ENCODE measurements at regions of chr2 and their contacts with region 1.

Region 1: GRCh38 chr2:31255911-31256571 is 22.1 kb downstream of the EHD3 start:
- DNase-seq: peak; percentile 54
- ATAC-seq: peak; percentile 65
- H3K4me3 ChIP-seq: peak overlapping the region in 3 of 5 experiments; percentile 12 to 26 (median 22)
- H3K4me3 Mint-ChIP-seq: peak overlapping the region; percentile 83
- H3K27ac ChIP-seq: peak overlapping the region; percentile 51 to 60
- H3K27ac Mint-ChIP-seq: peak overlapping the region; percentile 96
- H3K4me1 ChIP-seq: peaks cover 78 to 86% of the 10 kb centered on the region in 2 donors
- H3K4me1 Mint-ChIP-seq: peaks cover 83% of the 10 kb centered on the region
- H3K27me3 ChIP-seq: no peaks in the 10 kb centered on the region
- H3K27me3 Mint-ChIP-seq: no peaks in the 10 kb centered on the region
- CTCF ChIP-seq: no peak

Region 2: DNA sequence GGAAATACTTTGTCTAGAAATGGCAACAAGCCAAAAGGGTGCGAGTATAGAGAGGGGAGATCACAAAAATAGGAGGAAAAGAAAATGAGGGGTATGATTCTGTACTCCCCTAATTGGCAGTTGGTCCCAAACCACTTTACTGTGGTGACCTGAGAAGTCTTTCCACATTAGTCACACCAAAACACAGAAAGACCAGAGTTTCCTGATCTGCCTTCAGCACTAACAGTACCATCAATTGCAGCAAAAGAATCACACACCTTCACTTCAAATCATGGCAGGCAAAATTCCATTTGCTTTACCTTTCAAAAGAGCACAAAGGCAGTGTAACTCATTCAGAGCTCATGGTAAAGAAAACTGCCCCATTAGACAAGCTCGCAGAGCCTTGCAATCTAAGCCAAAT is 1421.4 kb before region 1 on chr2:
- CTCF ChIA-PET with region 1: no interaction called
- POLR2A ChIA-PET with region 1: no interaction called
- intact Hi-C with region 1: no loop called
- DNase-seq: no peak
- ATAC-seq: no peak
- H3K4me3 ChIP-seq: no peak overlapping the region
- H3K4me3 Mint-ChIP-seq: no peak overlapping the region
- H3K27ac ChIP-seq: no peak overlapping the region
- H3K27ac Mint-ChIP-seq: no peak overlapping the region
- H3K4me1 ChIP-seq: no peaks in the 10 kb centered on the region
- H3K4me1 Mint-ChIP-seq: no peaks in the 10 kb centered on the region
- H3K27me3 ChIP-seq: peaks cover 0 to 3% (median 0%) of the 10 kb centered on the region in 4 experiments
- H3K27me3 Mint-ChIP-seq: peaks cover 7% of the 10 kb centered on the region
- CTCF ChIP-seq: no peak

Region 3: DNA sequence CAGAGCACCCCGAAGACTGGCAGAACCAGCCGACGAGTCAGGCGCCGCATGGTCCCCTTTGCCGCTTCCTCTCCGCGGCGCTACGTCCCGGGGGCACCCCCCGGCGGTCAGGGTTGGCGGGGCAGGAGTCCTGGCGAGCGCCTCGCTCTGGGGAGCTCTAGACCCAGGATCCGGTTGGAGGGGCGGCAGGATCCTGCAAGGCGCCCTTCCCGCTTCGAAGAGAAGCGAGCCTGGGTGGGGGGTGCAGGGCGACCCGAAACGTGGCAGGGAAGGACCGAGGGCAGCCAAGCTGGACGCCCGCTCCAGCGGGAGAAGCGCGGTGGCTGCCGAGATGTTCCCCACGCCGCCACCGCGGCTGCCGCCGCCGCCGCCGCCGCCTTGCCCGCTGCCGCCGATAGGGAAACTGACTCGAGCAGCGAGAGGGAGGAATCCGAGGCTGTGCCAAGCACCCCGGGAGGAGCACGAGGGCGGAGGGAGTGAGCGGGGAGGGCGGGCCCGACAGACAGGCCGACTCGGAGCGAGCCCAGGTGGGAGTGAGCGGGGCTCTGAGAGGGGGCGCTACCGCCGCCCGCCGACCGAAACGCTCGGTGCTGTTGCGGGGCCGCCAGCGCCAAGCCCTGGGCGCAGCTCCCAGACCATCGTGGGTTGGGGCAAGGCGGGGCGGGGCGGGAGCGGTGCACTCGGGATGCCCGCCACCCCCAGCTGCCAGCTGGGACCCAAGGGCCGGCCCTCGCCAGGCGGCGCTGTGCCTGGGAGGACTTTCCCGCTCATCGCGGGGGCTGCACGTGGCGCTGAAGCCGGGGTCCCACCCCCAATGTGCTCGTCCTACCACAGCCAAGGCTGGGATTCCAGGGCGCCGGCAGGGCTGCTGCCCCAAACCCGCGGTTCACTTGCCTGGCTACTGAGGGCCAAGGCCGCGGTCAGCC is 117.7 kb before region 1 on chr2 and contains the start of gene GALNT14:
- CTCF ChIA-PET with region 1: interaction called, 23 read pairs
- POLR2A ChIA-PET with region 1: interaction called, 4 read pairs
- intact Hi-C with region 1: loop called (anchors 2 kb)
- DNase-seq: peak; percentile 77
- ATAC-seq: peak; percentile 78
- H3K4me3 ChIP-seq: peak within 1 kb of the TSS; percentile 56 to 81 (median 60)
- H3K4me3 Mint-ChIP-seq: peak within 1 kb of the TSS; percentile 90
- H3K27ac ChIP-seq: no peak within 1 kb of the TSS
- H3K27ac Mint-ChIP-seq: peak within 1 kb of the TSS; percentile 26
- H3K4me1 ChIP-seq: peaks cover 15 to 16% of the 10 kb centered on the region in 2 donors
- H3K4me1 Mint-ChIP-seq: peaks cover 17% of the 10 kb centered on the region
- H3K27me3 ChIP-seq: peaks cover 0 to 11% (median 7%) of the 10 kb centered on the region in 4 experiments
- H3K27me3 Mint-ChIP-seq: peaks cover 21% of the 10 kb centered on the region
- CTCF ChIP-seq: peak; percentile 60
- total RNA-seq, gene GALNT14: 4.9 and 6.2 TPM in 2 replicates

Region 4: GRCh38 chr2:31233741-31234682 is 22.0 kb before region 1 on chr2 and contains the start of gene EHD3:
- CTCF ChIA-PET with region 1: interaction called, 33 read pairs
- POLR2A ChIA-PET with region 1: interaction called, 26 read pairs
- intact Hi-C with region 1: loop called (anchors 1 kb)
- DNase-seq: peak; percentile 86
- ATAC-seq: peak; percentile 97
- H3K4me3 ChIP-seq: peak within 1 kb of the TSS; percentile 46 to 79 (median 70)
- H3K4me3 Mint-ChIP-seq: peak within 1 kb of the TSS; percentile 94
- H3K27ac ChIP-seq: peak within 1 kb of the TSS; percentile 62 to 69
- H3K27ac Mint-ChIP-seq: peak within 1 kb of the TSS; percentile 80
- H3K4me1 ChIP-seq: peaks cover 28 to 35% of the 10 kb centered on the region in 2 donors
- H3K4me1 Mint-ChIP-seq: peaks cover 45% of the 10 kb centered on the region
- H3K27me3 ChIP-seq: no peaks in the 10 kb centered on the region
- H3K27me3 Mint-ChIP-seq: no peaks in the 10 kb centered on the region
- CTCF ChIP-seq: no peak
- total RNA-seq, gene EHD3: 60.4 and 60.5 TPM in 2 replicates

Region 5: GRCh38 chr2:31318361-31319336 is 62.6 kb after region 1 on chr2:
- CTCF ChIA-PET with region 1: interaction called, 5 read pairs
- POLR2A ChIA-PET with region 1: interaction called, 11 read pairs
- intact Hi-C with region 1: loop called (anchors 1 kb)
- DNase-seq: peak; percentile 47
- ATAC-seq: peak; percentile 92
- H3K4me3 ChIP-seq: peak overlapping the region in 1 of 5 experiments; percentile 31
- H3K4me3 Mint-ChIP-seq: peak overlapping the region; percentile 67
- H3K27ac ChIP-seq: peak overlapping the region; percentile 11 to 65
- H3K27ac Mint-ChIP-seq: peak overlapping the region; percentile 89
- H3K4me1 ChIP-seq: peaks cover 31% of the 10 kb centered on the region in 2 donors
- H3K4me1 Mint-ChIP-seq: peaks cover 51% of the 10 kb centered on the region
- H3K27me3 ChIP-seq: no peaks in the 10 kb centered on the region
- H3K27me3 Mint-ChIP-seq: no peaks in the 10 kb centered on the region
- CTCF ChIP-seq: no peak

Region 6: DNA sequence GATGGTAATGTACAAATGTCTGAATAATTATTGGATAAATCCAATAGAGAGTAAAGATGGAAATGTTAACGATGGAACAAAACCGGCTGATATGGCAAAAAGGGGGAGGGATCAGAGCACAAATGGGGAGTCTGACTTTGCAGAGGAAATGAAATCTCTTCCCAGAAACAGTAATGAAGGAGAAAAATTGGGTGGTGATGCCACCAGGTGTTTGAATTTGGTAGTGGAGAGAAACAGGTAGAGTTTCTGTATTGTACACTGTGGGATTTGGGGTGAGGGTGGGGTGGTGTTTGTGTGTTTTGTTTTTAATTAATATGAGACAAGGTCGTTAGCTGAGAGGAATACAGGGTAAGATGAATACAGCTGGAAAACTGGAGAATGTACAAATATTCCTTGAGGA is 178.9 kb after region 1 on chr2:
- CTCF ChIA-PET with region 1: no interaction called
- POLR2A ChIA-PET with region 1: no interaction called
- intact Hi-C with region 1: no loop called
- DNase-seq: no peak
- ATAC-seq: no peak
- H3K4me3 ChIP-seq: no peak overlapping the region
- H3K4me3 Mint-ChIP-seq: no peak overlapping the region
- H3K27ac ChIP-seq: no peak overlapping the region
- H3K27ac Mint-ChIP-seq: no peak overlapping the region
- H3K4me1 ChIP-seq: no peaks in the 10 kb centered on the region
- H3K4me1 Mint-ChIP-seq: no peaks in the 10 kb centered on the region
- H3K27me3 ChIP-seq: peaks cover 0 to 3% (median under 1%) of the 10 kb centered on the region in 4 experiments
- H3K27me3 Mint-ChIP-seq: peaks cover under 1% of the 10 kb centered on the region
- CTCF ChIP-seq: no peak

Region 7: GRCh38 chr2:31504311-31504710 is 248.3 kb after region 1 on chr2:
- CTCF ChIA-PET with region 1: no interaction called
- POLR2A ChIA-PET with region 1: no interaction called
- intact Hi-C with region 1: no loop called
- DNase-seq: no peak
- ATAC-seq: no peak
- H3K4me3 ChIP-seq: no peak overlapping the region
- H3K4me3 Mint-ChIP-seq: no peak overlapping the region
- H3K27ac ChIP-seq: no peak overlapping the region
- H3K27ac Mint-ChIP-seq: no peak overlapping the region
- H3K4me1 ChIP-seq: no peaks in the 10 kb centered on the region
- H3K4me1 Mint-ChIP-seq: no peaks in the 10 kb centered on the region
- H3K27me3 ChIP-seq: peaks cover 0 to 5% (median 2%) of the 10 kb centered on the region in 4 experiments
- H3K27me3 Mint-ChIP-seq: peaks cover 16% of the 10 kb centered on the region
- CTCF ChIP-seq: no peak